ENCODE measurements at regions of chr19 and their contacts with region 1.

Region 1: DNA sequence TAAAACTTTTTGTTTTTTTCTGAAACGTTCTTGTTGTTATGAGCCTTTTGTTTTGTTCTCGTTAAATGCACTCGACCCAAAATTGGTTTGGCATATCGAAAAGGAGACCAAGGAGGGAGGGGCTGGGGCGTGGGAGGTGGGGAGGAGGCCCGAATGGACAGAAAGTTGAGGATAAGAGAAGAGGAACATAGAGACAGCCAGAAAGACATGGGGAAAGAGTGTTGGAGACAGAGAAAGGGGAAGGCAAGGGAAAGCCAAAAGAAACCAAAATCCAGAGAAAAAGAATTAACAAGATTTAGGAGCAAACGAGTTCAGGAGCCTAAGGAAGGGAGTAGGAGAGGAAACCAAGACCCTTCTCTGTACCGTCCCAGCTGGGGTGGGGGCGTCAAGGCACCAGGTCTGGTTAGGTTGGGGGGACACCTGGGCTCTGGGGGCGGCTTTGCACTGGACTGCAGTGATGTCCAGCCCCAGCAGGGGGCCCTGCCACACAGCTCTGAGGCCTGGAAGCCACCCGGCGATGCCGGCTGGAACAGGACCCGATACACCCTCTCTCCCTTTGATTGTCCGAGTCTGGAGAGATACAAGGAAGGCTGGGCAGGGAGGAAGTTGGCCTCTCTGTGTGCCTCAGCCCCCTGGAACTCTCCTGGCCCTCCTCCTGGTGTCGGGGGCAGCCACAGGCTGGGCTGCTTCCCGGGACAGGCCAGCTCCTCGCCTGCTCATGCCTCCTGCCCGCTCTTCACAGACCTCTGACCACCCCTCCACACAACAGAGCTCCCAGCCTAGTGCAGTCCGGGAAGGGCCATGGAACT is 11.6 kb upstream of the ASF1B start:
- DNase-seq: peak; percentile 92
- H3K4me3 ChIP-seq: no peak overlapping the region; a peak in 1 of 4 replicates
- H3K27ac ChIP-seq: peak overlapping the region in 1 of 2 experiments; percentile 17; a peak in 1 of 4 replicates
- H3K4me1 ChIP-seq: peaks cover 0 to 26% of the 10 kb centered on the region in 2 experiments; a peak in 1 of 4 replicates
- H3K27me3 ChIP-seq: no peaks in the 10 kb centered on the region
- CTCF ChIP-seq: peak; percentile 77
- EP300 ChIP-seq: no peak
- RAD21 ChIP-seq: peak; percentile 80

Region 2: GRCh38 chr19:14160017-14160703 is 12.2 kb after region 1 on chr19:
- CTCF ChIA-PET with region 1: interaction called, 17 read pairs
- POLR2A ChIA-PET with region 1: interaction called, 3 read pairs
- DNase-seq: no peak
- H3K4me3 ChIP-seq: no peak overlapping the region
- H3K27ac ChIP-seq: no peak overlapping the region
- H3K4me1 ChIP-seq: peaks cover 0 to 6% of the 10 kb centered on the region in 2 experiments; a peak in 1 of 4 replicates
- H3K27me3 ChIP-seq: no peaks in the 10 kb centered on the region
- CTCF ChIP-seq: no peak
- EP300 ChIP-seq: no peak
- RAD21 ChIP-seq: no peak

Measured in SK-N-SH (cell line).